GM12878 (cell line): ENCODE measurements at regions of chr1 and their contacts with region 1.

Region 1: GRCh38 chr1:84122780-84123382 is 21.2 kb upstream of the PRKACB start:
- DNase-seq: no peak
- ATAC-seq: peak; percentile 77
- H3K4me3 ChIP-seq: no peak overlapping the region
- H3K27ac ChIP-seq: no peak overlapping the region
- H3K4me1 ChIP-seq: no peaks in the 10 kb centered on the region
- H3K27me3 ChIP-seq: no peaks in the 10 kb centered on the region
- CTCF ChIP-seq: peak; percentile 50 to 64 (median 58)
- EP300 ChIP-seq: no peak
- POLR2A ChIP-seq: no peak
- RAD21 ChIP-seq: peak; percentile 90

Region 2: GRCh38 chr1:83905315-83905907 is 217.5 kb before region 1 on chr1:
- CTCF ChIA-PET with region 1: interaction called, 9 read pairs
- POLR2A ChIA-PET with region 1: no interaction called
- RAD21 ChIA-PET with region 1: no interaction called
- SMC1A ChIA-PET with region 1: no interaction called
- in situ Hi-C with region 1: no loop called
- intact Hi-C with region 1: loop called (anchors 2 kb)
- DNase-seq: no peak
- ATAC-seq: peak; percentile 35; the same call in 1 of the 3 replicates
- H3K4me3 ChIP-seq: no peak overlapping the region
- H3K27ac ChIP-seq: no peak overlapping the region
- H3K4me1 ChIP-seq: no peaks in the 10 kb centered on the region
- H3K27me3 ChIP-seq: no peaks in the 10 kb centered on the region
- CTCF ChIP-seq: peak; percentile 42 to 51 (median 46); a peak in 5 of 6 replicates
- EP300 ChIP-seq: no peak
- POLR2A ChIP-seq: no peak
- RAD21 ChIP-seq: peak; percentile 49